ENCODE measurements at regions of chr4 and their contacts with region 1.

Region 1: DNA sequence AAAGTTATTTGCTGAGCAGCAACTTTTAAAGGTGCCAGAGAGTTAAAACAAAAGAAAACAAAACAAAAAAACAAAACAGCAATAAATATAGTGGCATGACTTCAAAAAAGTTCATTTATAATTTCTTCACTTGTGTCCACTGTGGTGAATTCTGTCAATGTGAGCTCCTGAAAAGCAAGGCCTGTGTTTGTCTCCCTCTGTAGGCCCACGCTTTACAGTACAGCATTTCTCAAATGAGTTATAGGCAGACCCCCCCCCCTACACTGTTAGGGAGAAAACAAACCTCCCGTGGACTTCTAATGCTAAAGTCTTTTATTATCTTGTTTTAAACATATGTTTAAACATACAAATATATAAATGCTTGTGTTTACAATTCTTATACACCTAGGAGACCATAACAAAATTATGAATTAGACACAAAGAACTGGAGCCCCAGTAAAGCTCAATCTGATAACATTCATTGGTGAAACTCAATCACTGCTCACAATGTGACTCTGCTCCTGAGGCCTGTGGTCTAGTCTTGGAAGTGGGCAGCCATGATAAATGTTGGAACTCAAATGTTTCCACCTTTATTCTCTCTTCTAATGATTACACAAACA is 47.0 kb upstream of the SCOC start:
- DNase-seq: peak; percentile 61
- H3K4me3 Mint-ChIP-seq: no peak overlapping the region
- H3K27ac Mint-ChIP-seq: no peak overlapping the region
- H3K4me1 Mint-ChIP-seq: no peaks in the 10 kb centered on the region
- H3K27me3 Mint-ChIP-seq: no peaks in the 10 kb centered on the region
- CTCF ChIP-seq: peak; percentile 76

Region 2: GRCh38 chr4:139651282-139652194 is 675.0 kb before region 1 on chr4:
- CTCF ChIA-PET with region 1: interaction called, 44 read pairs
- POLR2A ChIA-PET with region 1: interaction called, 3 read pairs
- intact Hi-C with region 1: loop called (anchors 1 kb)
- DNase-seq: peak; percentile 85
- H3K4me3 Mint-ChIP-seq: no peak overlapping the region
- H3K27ac Mint-ChIP-seq: no peak overlapping the region
- H3K4me1 Mint-ChIP-seq: peaks cover 25% of the 10 kb centered on the region
- H3K27me3 Mint-ChIP-seq: no peaks in the 10 kb centered on the region
- CTCF ChIP-seq: peak; percentile 77

Region 3: GRCh38 chr4:140012688-140013486 is 313.6 kb before region 1 on chr4:
- CTCF ChIA-PET with region 1: interaction called, 3 read pairs
- POLR2A ChIA-PET with region 1: no interaction called
- intact Hi-C with region 1: loop called (anchors 1 kb)
- DNase-seq: peak; percentile 86
- H3K4me3 Mint-ChIP-seq: no peak overlapping the region
- H3K27ac Mint-ChIP-seq: peak overlapping the region; percentile 0
- H3K4me1 Mint-ChIP-seq: peaks cover 7% of the 10 kb centered on the region
- H3K27me3 Mint-ChIP-seq: no peaks in the 10 kb centered on the region
- CTCF ChIP-seq: peak; percentile 47

Region 4: GRCh38 chr4:140071806-140072205 is 254.7 kb before region 1 on chr4:
- CTCF ChIA-PET with region 1: no interaction called
- POLR2A ChIA-PET with region 1: no interaction called
- intact Hi-C with region 1: no loop called
- DNase-seq: no peak
- H3K4me3 Mint-ChIP-seq: no peak overlapping the region
- H3K27ac Mint-ChIP-seq: no peak overlapping the region
- H3K4me1 Mint-ChIP-seq: peaks cover 13% of the 10 kb centered on the region
- H3K27me3 Mint-ChIP-seq: no peaks in the 10 kb centered on the region
- CTCF ChIP-seq: no peak

Region 5: DNA sequence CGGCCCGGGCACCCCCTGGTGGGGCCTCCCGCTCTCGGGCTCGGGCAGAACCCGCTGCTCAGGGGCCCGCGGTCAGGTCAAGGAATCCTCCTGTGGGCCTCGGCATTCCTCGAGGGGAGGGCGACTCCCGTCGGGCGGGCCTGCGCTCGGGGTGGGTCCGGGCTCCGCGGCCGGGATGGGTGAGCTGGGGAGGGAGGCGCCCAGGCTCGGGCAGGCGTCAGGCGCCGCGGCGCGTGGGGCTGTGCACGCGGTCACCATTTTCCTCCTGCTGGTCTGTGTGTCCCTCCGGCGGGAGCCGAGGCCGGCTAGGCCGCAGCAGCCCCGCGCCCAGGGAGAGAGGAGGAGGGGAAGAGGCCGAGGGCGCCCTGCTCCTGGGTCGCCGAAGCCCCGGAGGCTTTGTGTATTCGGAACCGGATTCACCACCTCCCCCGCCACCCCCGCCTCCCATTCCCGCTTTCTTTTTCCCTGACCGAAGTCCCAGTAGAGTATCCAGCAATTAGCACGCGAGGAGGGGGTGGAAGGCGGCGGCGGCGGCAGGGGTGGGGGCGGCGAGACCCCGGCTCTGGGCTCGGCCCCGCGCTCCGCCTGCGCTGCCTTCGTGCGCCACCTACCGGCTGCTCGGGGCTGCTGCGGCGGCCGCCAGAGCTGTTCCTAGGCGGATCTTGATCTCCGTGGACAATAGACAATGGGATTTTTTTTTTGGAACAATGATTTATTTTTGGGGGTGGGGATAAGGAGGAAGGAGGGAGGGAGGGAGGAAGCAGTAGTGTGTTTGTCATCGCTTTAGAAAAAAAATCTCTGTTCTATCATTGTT is 73.5 kb before region 1 on chr4:
- CTCF ChIA-PET with region 1: interaction called, 6 read pairs
- POLR2A ChIA-PET with region 1: interaction called, 3 read pairs
- intact Hi-C with region 1: loop called (anchors 1 kb)
- DNase-seq: peak; percentile 60
- H3K4me3 Mint-ChIP-seq: peak overlapping the region; percentile 59
- H3K27ac Mint-ChIP-seq: no peak overlapping the region
- H3K4me1 Mint-ChIP-seq: peaks cover 22% of the 10 kb centered on the region
- H3K27me3 Mint-ChIP-seq: no peaks in the 10 kb centered on the region
- CTCF ChIP-seq: peak; percentile 97

Region 6: DNA sequence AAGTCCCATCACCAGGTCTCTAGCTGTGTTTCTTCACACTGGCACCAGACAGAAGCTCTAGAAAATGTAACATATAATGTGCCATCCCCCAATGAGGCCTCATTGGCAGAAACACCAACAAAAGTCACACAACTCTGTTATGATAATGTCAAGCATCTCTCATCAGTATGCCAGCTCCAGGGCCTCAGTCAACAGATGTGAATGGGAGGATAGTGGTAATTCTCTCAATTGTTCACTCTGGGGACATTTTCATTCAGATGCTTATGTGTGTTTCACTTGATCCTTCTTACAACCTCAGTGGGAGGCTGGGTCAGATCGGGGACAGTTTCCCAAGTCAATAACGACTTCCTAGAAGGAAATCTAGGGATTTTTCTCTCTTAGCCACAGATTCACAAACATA is 10.5 kb before region 1 on chr4:
- CTCF ChIA-PET with region 1: interaction called, 19 read pairs
- POLR2A ChIA-PET with region 1: interaction called, 3 read pairs
- intact Hi-C with region 1: no loop called
- DNase-seq: no peak
- H3K4me3 Mint-ChIP-seq: no peak overlapping the region
- H3K27ac Mint-ChIP-seq: no peak overlapping the region
- H3K4me1 Mint-ChIP-seq: no peaks in the 10 kb centered on the region
- H3K27me3 Mint-ChIP-seq: no peaks in the 10 kb centered on the region
- CTCF ChIP-seq: no peak

Region 7: GRCh38 chr4:140485939-140486338 is 159.4 kb after region 1 on chr4:
- CTCF ChIA-PET with region 1: no interaction called
- POLR2A ChIA-PET with region 1: no interaction called
- intact Hi-C with region 1: no loop called
- DNase-seq: no peak
- H3K4me3 Mint-ChIP-seq: no peak overlapping the region
- H3K27ac Mint-ChIP-seq: no peak overlapping the region
- H3K4me1 Mint-ChIP-seq: no peaks in the 10 kb centered on the region
- H3K27me3 Mint-ChIP-seq: no peaks in the 10 kb centered on the region
- CTCF ChIP-seq: no peak

Region 8: GRCh38 chr4:140497747-140498636 is 171.5 kb after region 1 on chr4 and contains the start of gene MGAT4D:
- CTCF ChIA-PET with region 1: no interaction called
- POLR2A ChIA-PET with region 1: no interaction called
- intact Hi-C with region 1: no loop called
- DNase-seq: no peak
- H3K4me3 Mint-ChIP-seq: no peak within 1 kb of the TSS
- H3K27ac Mint-ChIP-seq: no peak within 1 kb of the TSS
- H3K4me1 Mint-ChIP-seq: no peaks in the 10 kb centered on the region
- H3K27me3 Mint-ChIP-seq: peaks cover 11% of the 10 kb centered on the region
- CTCF ChIP-seq: no peak
- total RNA-seq, gene MGAT4D: not detected in 2 replicates

Region 9: GRCh38 chr4:140609548-140610425 is 283.3 kb after region 1 on chr4:
- CTCF ChIA-PET with region 1: interaction called, 15 read pairs
- POLR2A ChIA-PET with region 1: no interaction called
- intact Hi-C with region 1: loop called (anchors 1 kb)
- DNase-seq: peak; percentile 66
- H3K4me3 Mint-ChIP-seq: no peak overlapping the region
- H3K27ac Mint-ChIP-seq: no peak overlapping the region
- H3K4me1 Mint-ChIP-seq: peaks cover 6% of the 10 kb centered on the region
- H3K27me3 Mint-ChIP-seq: no peaks in the 10 kb centered on the region
- CTCF ChIP-seq: peak; percentile 70

Measured in MCF 10A (cell line).